Ascending aorta (tissue), 2 donors: ENCODE measurements at regions of chr2 and their contacts with region 1.

Region 1: GRCh38 chr2:159286709-159287441 is 372 bp upstream of the WDSUB1 start:
- DNase-seq: peak; percentile 92 to 99
- H3K4me3 ChIP-seq: peak overlapping the region; percentile 88 to 96
- H3K27ac ChIP-seq: peak overlapping the region; percentile 86 to 87
- H3K4me1 ChIP-seq: peaks cover 4 to 6% of the 10 kb centered on the region in 2 donors
- H3K27me3 ChIP-seq: no peaks in the 10 kb centered on the region
- CTCF ChIP-seq: no peak

Region 2: DNA sequence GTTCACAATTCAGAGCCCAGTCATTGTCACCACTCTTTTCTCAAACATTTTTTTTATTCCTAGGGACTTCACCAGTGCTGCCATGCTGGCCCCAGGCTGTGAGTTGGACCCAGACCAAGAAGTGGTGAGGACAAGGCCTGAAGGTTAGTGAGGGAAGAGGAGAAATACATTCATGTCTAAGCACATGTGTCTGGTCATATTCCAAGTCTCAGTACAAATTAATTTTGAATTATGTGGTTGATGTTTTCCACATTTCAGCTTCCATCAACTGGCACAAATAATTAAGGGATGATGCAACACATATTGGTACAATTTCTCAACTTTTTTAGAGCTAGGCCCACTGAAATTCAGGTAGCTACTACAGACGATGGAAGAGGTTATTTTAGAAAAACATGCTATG is 1291.8 kb before region 1 on chr2:
- intact Hi-C with region 1: no loop called
- DNase-seq: no peak
- H3K4me3 ChIP-seq: no peak overlapping the region
- H3K27ac ChIP-seq: no peak overlapping the region
- H3K4me1 ChIP-seq: no peaks in the 10 kb centered on the region
- H3K27me3 ChIP-seq: no peaks in the 10 kb centered on the region
- CTCF ChIP-seq: no peak

Region 3: GRCh38 chr2:159131914-159132281 is 155.0 kb before region 1 on chr2:
- intact Hi-C with region 1: loop called (anchors 5 kb)
- DNase-seq: no peak
- H3K4me3 ChIP-seq: no peak overlapping the region
- H3K27ac ChIP-seq: peak overlapping the region; percentile 44 to 70
- H3K4me1 ChIP-seq: peaks cover 0 to 36% of the 10 kb centered on the region in 2 donors
- H3K27me3 ChIP-seq: no peaks in the 10 kb centered on the region
- CTCF ChIP-seq: no peak

Region 4: DNA sequence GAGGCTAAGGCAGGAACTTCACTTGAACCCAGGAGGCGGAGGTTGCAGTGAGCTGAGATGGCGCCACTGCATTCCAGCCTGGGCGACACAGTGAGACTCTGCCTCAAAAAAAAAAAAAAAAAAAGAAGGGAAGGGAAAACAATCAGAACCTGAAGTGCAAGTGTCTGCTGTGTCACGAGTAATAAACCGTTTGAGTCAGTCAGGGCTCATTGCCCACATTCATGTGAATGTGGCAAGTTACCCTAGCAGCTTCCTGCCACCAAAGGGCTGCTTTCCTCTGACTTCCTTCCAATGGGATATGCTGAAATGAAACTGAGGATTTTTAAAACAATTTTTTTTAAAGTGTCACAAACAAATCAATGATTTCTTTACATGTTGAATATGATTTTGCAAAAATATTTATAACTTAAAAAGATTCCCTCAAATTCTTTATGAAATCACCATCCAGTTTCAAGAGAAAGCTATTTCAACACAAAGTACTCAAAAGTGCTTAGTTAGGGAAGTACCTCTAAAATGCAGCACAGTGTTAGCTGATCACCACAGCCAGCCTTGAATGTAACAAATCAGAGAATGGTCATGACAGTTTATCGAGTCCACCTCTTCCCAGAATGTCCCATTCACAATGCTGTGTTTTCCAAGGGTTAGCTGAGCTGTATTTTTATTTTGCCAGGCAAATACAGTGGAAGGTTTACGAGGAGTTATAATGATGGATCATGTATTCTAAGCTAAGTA is 36.7 kb before region 1 on chr2:
- intact Hi-C with region 1: loop called (anchors 1 kb)
- DNase-seq: peak; percentile 33 to 86
- H3K4me3 ChIP-seq: peak overlapping the region in 1 of 2 donors; percentile 18
- H3K27ac ChIP-seq: peak overlapping the region; percentile 74 to 82
- H3K4me1 ChIP-seq: no peaks in the 10 kb centered on the region
- H3K27me3 ChIP-seq: no peaks in the 10 kb centered on the region
- CTCF ChIP-seq: no peak

Region 5: GRCh38 chr2:159712143-159712928 is 425.5 kb after region 1 on chr2 and contains the start of gene MARCHF7:
- intact Hi-C with region 1: loop called (anchors 5 kb)
- DNase-seq: peak; percentile 82 to 98
- H3K4me3 ChIP-seq: peak within 1 kb of the TSS; percentile 82 to 94
- H3K27ac ChIP-seq: peak within 1 kb of the TSS; percentile 97 to 98
- H3K4me1 ChIP-seq: peaks cover 3 to 31% of the 10 kb centered on the region in 2 donors
- H3K27me3 ChIP-seq: no peaks in the 10 kb centered on the region
- CTCF ChIP-seq: peak; percentile 16 to 51 (median 36)
- total RNA-seq, gene MARCHF7: 49.4 TPM

Region 6: DNA sequence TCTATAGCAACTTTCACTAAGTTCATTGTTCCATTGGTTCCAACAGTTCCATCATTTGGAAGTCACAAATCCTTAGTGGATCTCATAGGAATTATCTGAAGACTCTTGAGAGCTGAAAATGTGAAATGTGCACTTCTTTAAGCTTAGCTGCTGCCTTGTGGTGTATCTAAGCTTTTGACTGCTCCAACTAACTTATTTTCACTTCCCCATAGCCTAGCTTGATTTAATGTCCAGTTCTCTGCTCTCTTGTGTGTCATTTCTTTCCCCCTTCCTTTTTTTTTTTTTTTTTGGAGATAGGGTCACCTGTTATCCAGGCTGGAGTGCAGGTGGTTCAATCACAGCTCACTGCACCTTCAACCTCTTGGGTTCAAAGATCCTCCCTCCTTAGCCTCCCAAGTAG is 546.0 kb after region 1 on chr2:
- intact Hi-C with region 1: no loop called
- DNase-seq: no peak
- H3K4me3 ChIP-seq: no peak overlapping the region
- H3K27ac ChIP-seq: no peak overlapping the region
- H3K4me1 ChIP-seq: no peaks in the 10 kb centered on the region
- H3K27me3 ChIP-seq: no peaks in the 10 kb centered on the region
- CTCF ChIP-seq: no peak